ENCODE measurements at regions of chr19 and their contacts with region 1.

Region 1: GRCh38 chr19:45643024-45643926 is 4.1 kb upstream of the EML2 start:
- DNase-seq: peak; percentile 95
- ATAC-seq: peak; percentile 46
- H3K4me3 ChIP-seq: peak overlapping the region in 3 of 5 experiments; percentile 55 to 81 (median 62)
- H3K4me3 Mint-ChIP-seq: peak overlapping the region; percentile 85
- H3K27ac ChIP-seq: peak overlapping the region; percentile 86 to 93
- H3K27ac Mint-ChIP-seq: peak overlapping the region; percentile 92
- H3K4me1 ChIP-seq: peaks cover 39 to 65% of the 10 kb centered on the region in 2 donors
- H3K4me1 Mint-ChIP-seq: peaks cover 50% of the 10 kb centered on the region
- H3K27me3 ChIP-seq: peaks cover 0 to 13% (median 5%) of the 10 kb centered on the region in 4 experiments
- H3K27me3 Mint-ChIP-seq: peaks cover 6% of the 10 kb centered on the region
- CTCF ChIP-seq: peak; percentile 96

Region 2: GRCh38 chr19:45423589-45424190 is 219.6 kb before region 1 on chr19 and contains the start of gene ERCC1:
- CTCF ChIA-PET with region 1: no interaction called
- POLR2A ChIA-PET with region 1: no interaction called
- intact Hi-C with region 1: loop called (anchors 5 kb)
- DNase-seq: peak; percentile 87
- ATAC-seq: peak; percentile 79
- H3K4me3 ChIP-seq: peak within 1 kb of the TSS; percentile 26 to 77 (median 69)
- H3K4me3 Mint-ChIP-seq: peak within 1 kb of the TSS; percentile 97
- H3K27ac ChIP-seq: peak within 1 kb of the TSS; percentile 64 to 73
- H3K27ac Mint-ChIP-seq: peak within 1 kb of the TSS; percentile 94
- H3K4me1 ChIP-seq: peaks cover 36 to 62% of the 10 kb centered on the region in 2 donors
- H3K4me1 Mint-ChIP-seq: peaks cover 58% of the 10 kb centered on the region
- H3K27me3 ChIP-seq: peaks cover 0 to 11% (median 4%) of the 10 kb centered on the region in 4 experiments
- H3K27me3 Mint-ChIP-seq: peaks cover 11% of the 10 kb centered on the region
- CTCF ChIP-seq: no peak
- total RNA-seq, gene ERCC1: 75.7 and 80.2 TPM in 2 replicates

Region 3: GRCh38 chr19:45478454-45479238 is 164.6 kb before region 1 on chr19:
- CTCF ChIA-PET with region 1: interaction called, 18 read pairs
- POLR2A ChIA-PET with region 1: no interaction called
- intact Hi-C with region 1: no loop called
- DNase-seq: peak; percentile 95
- ATAC-seq: peak; percentile 83
- H3K4me3 ChIP-seq: peak overlapping the region; percentile 67 to 98 (median 79)
- H3K4me3 Mint-ChIP-seq: peak overlapping the region; percentile 74
- H3K27ac ChIP-seq: peak overlapping the region; percentile 99 to 100
- H3K27ac Mint-ChIP-seq: peak overlapping the region; percentile 98
- H3K4me1 ChIP-seq: peaks cover 7 to 16% of the 10 kb centered on the region in 2 donors
- H3K4me1 Mint-ChIP-seq: peaks cover 26% of the 10 kb centered on the region
- H3K27me3 ChIP-seq: peaks cover 0 to 6% (median 3%) of the 10 kb centered on the region in 4 experiments
- H3K27me3 Mint-ChIP-seq: peaks cover 10% of the 10 kb centered on the region
- CTCF ChIP-seq: peak; percentile 82

Region 4: GRCh38 chr19:45506246-45506990 is 136.9 kb before region 1 on chr19:
- CTCF ChIA-PET with region 1: interaction called, 3 read pairs
- POLR2A ChIA-PET with region 1: interaction called, 3 read pairs
- intact Hi-C with region 1: loop called (anchors 1 kb)
- DNase-seq: peak; percentile 98
- ATAC-seq: peak; percentile 74
- H3K4me3 ChIP-seq: peak overlapping the region; percentile 63 to 96 (median 84)
- H3K4me3 Mint-ChIP-seq: peak overlapping the region; percentile 94
- H3K27ac ChIP-seq: peak overlapping the region; percentile 83 to 87
- H3K27ac Mint-ChIP-seq: peak overlapping the region; percentile 94
- H3K4me1 ChIP-seq: peaks cover 26 to 43% of the 10 kb centered on the region in 2 donors
- H3K4me1 Mint-ChIP-seq: peaks cover 54% of the 10 kb centered on the region
- H3K27me3 ChIP-seq: no peaks in the 10 kb centered on the region
- H3K27me3 Mint-ChIP-seq: no peaks in the 10 kb centered on the region
- CTCF ChIP-seq: peak; percentile 63

Region 5: DNA sequence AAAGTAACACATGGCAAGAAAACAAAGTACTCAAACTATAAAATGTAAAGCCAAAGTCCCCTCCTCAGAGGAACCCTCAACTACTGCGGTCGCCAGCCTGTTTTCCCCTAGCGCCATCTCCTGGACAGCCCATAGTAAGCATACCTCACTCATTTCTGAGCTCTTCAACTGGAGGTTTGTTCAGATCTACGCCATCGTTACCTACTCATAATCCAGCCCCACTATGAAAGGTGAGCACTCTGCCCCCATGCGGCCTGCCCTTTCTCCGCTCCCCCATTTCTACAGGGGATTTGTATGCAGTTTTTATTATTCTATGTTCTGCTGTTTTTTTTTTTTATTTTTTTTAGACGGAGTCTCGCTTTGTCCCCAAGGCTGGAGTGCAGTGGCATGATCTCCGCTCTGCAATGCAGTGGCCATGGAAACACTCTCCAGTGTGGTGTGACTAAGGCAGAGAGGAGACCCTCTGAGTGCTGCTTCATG is 84.8 kb before region 1 on chr19:
- CTCF ChIA-PET with region 1: interaction called, 18 read pairs
- POLR2A ChIA-PET with region 1: no interaction called
- intact Hi-C with region 1: loop called (anchors 1 kb)
- DNase-seq: peak; percentile 84
- ATAC-seq: peak; percentile 98
- H3K4me3 ChIP-seq: no peak overlapping the region
- H3K4me3 Mint-ChIP-seq: no peak overlapping the region
- H3K27ac ChIP-seq: peak overlapping the region in 1 of 2 donors; percentile 30
- H3K27ac Mint-ChIP-seq: peak overlapping the region; percentile 8
- H3K4me1 ChIP-seq: peaks cover 3 to 31% of the 10 kb centered on the region in 2 donors
- H3K4me1 Mint-ChIP-seq: peaks cover 23% of the 10 kb centered on the region
- H3K27me3 ChIP-seq: no peaks in the 10 kb centered on the region
- H3K27me3 Mint-ChIP-seq: no peaks in the 10 kb centered on the region
- CTCF ChIP-seq: peak; percentile 85

Region 6: DNA sequence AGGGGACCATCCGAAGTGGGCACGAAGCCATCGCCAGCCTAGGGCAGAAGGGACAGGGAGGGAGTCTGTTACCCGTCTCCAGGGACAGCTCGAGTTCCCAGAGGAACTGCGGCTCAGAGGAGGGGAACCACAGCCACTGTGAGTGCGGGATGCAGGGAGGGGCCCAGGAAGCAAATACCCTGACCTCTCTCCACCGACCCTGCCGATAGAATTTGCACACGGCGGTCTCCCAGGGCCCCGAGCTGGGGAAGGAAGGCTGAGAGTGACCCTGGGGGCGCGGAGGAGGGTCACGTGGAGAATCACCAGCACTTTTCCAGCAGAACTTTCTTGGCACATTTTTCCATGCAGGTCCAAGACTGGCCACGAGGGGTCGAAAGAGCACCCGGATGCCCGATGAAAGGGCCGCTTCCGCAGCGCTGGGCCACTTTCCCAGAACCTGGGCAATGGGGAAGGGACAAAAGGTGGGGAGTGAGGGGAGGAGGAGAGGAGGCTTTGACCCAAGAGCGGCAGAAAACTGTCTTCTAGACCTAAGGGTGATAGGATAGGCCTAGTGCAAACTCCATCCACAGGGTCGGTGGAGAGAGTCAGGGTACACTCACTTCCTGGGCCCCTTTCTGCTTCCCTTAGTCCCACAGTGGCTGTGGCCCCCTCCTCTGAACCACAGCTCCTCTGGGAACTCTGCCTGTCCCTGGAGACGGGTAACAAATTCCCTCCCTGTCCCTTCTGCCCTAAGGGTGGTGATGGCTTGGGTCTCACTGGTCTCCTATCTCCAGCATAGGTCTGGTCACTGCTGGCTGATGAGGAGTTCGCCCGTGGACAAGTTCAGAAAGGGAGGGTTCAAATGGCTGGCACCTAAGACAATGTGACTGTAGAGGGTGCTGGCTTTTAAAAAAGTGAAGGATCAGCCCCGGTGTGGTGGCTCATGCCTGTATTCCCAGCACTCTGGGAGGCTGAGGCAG is 35.9 kb before region 1 on chr19:
- CTCF ChIA-PET with region 1: interaction called, 58 read pairs
- POLR2A ChIA-PET with region 1: interaction called, 3 read pairs
- intact Hi-C with region 1: loop called (anchors 1 kb)
- DNase-seq: peak; percentile 62
- ATAC-seq: peak; percentile 62
- H3K4me3 ChIP-seq: no peak overlapping the region
- H3K4me3 Mint-ChIP-seq: peak overlapping the region; percentile 47
- H3K27ac ChIP-seq: no peak overlapping the region
- H3K27ac Mint-ChIP-seq: peak overlapping the region; percentile 26
- H3K4me1 ChIP-seq: peaks cover 11 to 12% of the 10 kb centered on the region in 2 donors
- H3K4me1 Mint-ChIP-seq: peaks cover 10% of the 10 kb centered on the region
- H3K27me3 ChIP-seq: peaks cover 0 to 24% (median 3%) of the 10 kb centered on the region in 4 experiments
- H3K27me3 Mint-ChIP-seq: peaks cover 10% of the 10 kb centered on the region
- CTCF ChIP-seq: peak; percentile 73

Region 7: DNA sequence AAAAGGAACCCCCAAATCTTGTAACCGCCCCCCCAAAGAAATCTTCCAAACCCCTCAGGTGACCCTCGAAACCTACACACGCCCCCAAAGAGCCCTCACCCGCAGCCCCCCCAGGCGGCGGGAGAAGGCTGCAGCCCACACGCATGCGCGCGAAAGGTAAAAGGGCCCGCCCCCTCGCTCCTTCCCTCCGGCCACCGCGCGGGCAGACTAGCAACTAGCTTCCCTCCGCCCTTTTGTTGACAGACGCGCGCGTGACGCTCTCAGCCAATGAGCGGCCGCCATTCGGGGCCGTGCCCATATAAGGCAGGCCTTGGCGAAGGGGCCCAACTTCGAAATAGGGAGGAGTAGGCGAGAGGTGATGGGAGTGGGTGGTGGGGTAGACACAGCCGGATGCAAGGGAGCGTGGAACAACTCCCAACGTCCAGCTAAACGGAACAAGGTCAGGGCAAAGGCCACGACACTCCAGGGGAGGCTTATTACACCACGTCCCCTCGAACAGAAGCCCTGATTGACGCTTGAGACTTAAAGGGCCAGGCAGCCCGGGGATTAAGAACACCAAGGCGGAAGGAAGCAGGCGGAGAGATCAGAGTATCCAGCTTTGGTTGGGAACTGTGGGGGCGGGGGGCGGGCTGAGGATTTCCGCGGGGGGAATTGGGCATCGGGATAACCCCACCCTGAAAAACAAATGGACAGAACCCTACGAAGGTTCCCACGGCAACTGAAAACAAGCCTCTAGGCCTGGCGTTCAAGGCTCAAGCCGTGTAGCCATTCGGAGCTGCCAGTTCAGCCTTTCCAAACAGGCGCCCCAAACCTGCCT is 74.1 kb after region 1 on chr19:
- CTCF ChIA-PET with region 1: interaction called, 3 read pairs
- POLR2A ChIA-PET with region 1: interaction called, 3 read pairs
- intact Hi-C with region 1: loop called (anchors 1 kb)
- DNase-seq: peak; percentile 97
- ATAC-seq: peak; percentile 95
- H3K4me3 ChIP-seq: peak overlapping the region; percentile 76 to 93 (median 82)
- H3K4me3 Mint-ChIP-seq: peak overlapping the region; percentile 91
- H3K27ac ChIP-seq: peak overlapping the region; percentile 76 to 94
- H3K27ac Mint-ChIP-seq: peak overlapping the region; percentile 97
- H3K4me1 ChIP-seq: peaks cover 18 to 25% of the 10 kb centered on the region in 2 donors
- H3K4me1 Mint-ChIP-seq: peaks cover 39% of the 10 kb centered on the region
- H3K27me3 ChIP-seq: no peaks in the 10 kb centered on the region
- H3K27me3 Mint-ChIP-seq: no peaks in the 10 kb centered on the region
- CTCF ChIP-seq: no peak

Measured in B cell (primary cell).